ENCODE measurements at regions of chr11 and their contacts with region 1.

Region 1: DNA sequence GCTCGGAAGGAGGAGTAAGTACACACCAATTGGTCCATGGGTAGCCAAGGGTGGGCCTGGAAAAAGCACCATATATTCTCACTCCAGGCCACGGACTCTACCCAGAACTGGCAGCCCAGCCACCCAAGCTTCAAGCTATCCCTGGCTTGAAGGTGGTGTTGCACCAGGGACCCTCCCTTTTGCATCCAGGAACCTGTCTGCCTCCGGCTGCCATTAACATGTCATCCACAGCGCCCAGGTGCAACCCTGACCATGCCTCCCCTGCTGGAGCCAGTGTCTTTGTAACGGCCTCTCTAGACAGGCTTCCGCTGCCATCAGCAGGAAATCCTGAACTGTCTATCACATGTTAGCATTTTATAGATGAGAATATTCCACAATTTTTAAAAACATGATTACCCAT is 2158.5 kb upstream of the RAG2 start:
- DNase-seq: no peak
- ATAC-seq: no peak
- H3K4me3 ChIP-seq: no peak overlapping the region
- H3K27ac ChIP-seq: no peak overlapping the region
- H3K4me1 ChIP-seq: no peaks in the 10 kb centered on the region
- H3K27me3 ChIP-seq: no peaks in the 10 kb centered on the region
- CTCF ChIP-seq: no peak

Region 2: DNA sequence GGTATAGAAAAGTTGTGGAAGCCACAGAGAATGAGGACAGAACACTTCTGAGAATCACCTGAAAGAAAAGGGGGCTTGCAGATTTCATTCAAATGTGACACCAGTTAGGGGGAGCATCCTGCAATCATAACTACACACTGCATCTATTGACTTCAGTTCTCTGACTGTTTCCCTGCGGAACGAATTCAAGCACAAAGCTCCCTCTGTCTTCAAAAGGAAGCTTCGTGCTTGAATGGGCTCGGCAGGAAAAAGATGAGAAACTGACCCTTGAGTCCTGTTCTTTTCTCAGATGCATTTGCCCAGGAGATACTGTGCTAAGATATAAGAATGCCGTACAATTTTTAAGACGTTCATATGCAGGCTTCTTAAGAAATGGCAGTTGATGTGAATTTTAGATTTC is 158.1 kb before region 1 on chr11:
- intact Hi-C with region 1: loop called in 1 of 10 experiments (anchors 10 kb)
- DNase-seq: no peak
- ATAC-seq: no peak
- H3K4me3 ChIP-seq: no peak overlapping the region
- H3K27ac ChIP-seq: no peak overlapping the region
- H3K4me1 ChIP-seq: no peaks in the 10 kb centered on the region
- H3K27me3 ChIP-seq: no peaks in the 10 kb centered on the region
- CTCF ChIP-seq: peak in 1 of 9 donors; percentile 4

Region 3: DNA sequence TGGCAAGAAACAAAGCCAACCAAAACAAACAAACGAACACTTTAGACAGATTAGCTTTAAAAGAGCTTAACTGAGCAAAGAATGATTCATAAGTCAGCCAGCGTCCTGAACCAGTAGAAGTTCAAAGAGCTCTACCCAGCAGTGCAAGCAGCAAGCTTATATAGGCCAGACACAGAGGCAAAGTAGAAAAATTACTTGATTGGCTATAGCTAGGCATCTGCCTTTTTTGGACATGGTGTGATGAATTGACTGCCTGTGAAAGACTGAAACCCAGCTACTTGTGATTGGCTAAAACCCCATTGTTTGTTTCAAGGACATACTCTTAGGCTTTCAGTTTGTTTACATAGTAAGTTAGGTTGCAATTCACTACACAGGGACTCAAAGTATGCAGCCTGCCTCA is 38.5 kb before region 1 on chr11:
- intact Hi-C with region 1: no loop called
- DNase-seq: no peak
- ATAC-seq: no peak
- H3K4me3 ChIP-seq: no peak overlapping the region
- H3K27ac ChIP-seq: no peak overlapping the region
- H3K4me1 ChIP-seq: no peaks in the 10 kb centered on the region
- H3K27me3 ChIP-seq: no peaks in the 10 kb centered on the region
- CTCF ChIP-seq: no peak

Measured in heart right ventricle (tissue), 16 donors.